HEK293T (cell line): ENCODE measurements at regions of chr7 and their contacts with region 1.

Region 1: GRCh38 chr7:112449902-112450806 is at the start of gene IFRD1:
- DNase-seq: peak; percentile 97

Region 2: GRCh38 chr7:111622082-111622481 is 828.1 kb before region 1 on chr7:
- CTCF ChIA-PET with region 1: no interaction called
- POLR2A ChIA-PET with region 1: no interaction called
- DNase-seq: no peak

Region 3: DNA sequence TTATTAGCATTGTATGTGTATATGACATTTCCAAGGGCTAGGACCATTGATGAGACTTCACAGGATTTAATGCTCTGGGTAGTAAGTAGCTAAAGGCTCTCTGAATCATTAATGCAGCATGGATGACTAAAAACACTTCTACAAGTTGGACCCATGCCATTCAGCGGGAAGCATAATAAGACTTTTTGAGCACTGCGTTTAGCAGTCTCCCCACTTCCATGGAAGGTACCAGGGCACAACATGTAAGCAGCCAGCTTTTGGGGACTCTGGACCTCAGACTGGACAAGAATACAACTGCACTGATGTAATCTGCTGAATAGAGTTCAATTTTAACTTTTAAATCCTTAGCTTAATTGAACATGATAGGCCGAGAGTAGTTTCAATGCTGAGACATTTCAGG is 696.2 kb before region 1 on chr7:
- CTCF ChIA-PET with region 1: no interaction called
- POLR2A ChIA-PET with region 1: interaction called, 10 read pairs
- DNase-seq: no peak

Region 4: DNA sequence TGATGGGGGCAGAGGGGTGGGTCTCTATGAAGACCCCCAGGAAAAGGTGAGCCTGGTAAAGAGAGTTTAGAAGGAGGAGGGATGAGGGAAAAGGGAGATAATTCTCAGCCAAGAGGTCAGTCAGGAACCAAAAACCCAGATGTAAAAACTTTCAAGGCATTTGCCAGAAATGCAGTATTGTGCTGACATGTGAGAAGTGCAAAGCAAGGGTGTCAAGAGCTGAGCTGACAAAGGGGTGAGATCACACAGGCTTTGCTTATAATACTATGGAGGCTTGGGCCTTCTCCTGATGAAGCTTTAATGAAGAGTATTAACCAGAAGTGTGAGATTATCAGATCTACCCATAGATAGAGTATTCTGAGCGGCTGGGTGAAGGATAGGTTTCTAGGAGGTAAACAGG is 22.2 kb before region 1 on chr7:
- CTCF ChIA-PET with region 1: no interaction called
- POLR2A ChIA-PET with region 1: interaction called, 15 read pairs
- DNase-seq: no peak

Region 5: DNA sequence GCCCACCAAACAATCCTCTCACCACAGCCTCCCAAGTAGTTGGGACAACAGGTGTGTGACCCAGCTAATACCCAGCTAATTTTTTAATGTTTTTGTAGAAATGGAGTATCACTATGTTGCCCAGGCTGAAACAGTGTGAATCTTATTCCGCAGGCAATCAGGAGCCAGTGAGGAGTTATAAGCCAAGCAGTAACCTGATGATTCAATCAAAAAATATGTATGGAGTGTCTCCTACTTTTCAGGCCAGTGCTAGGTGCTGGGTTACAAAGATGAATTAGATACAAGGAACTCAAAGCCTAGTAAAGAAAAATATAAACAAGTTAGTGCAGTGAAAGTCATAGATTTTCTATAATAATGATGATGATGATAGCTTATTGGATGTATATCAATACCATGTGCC is 13.1 kb before region 1 on chr7:
- CTCF ChIA-PET with region 1: no interaction called
- POLR2A ChIA-PET with region 1: interaction called, 13 read pairs
- DNase-seq: no peak

Region 6: GRCh38 chr7:112462236-112462635 is 12.1 kb after region 1 on chr7:
- CTCF ChIA-PET with region 1: no interaction called
- POLR2A ChIA-PET with region 1: interaction called, 66 read pairs
- DNase-seq: no peak

Region 7: GRCh38 chr7:112495810-112496462 is 45.8 kb after region 1 on chr7:
- CTCF ChIA-PET with region 1: interaction called, 4 read pairs
- POLR2A ChIA-PET with region 1: interaction called, 12 read pairs
- DNase-seq: peak; percentile 48